Dorsolateral prefrontal cortex (tissue), 120 donors: ENCODE measurements at regions of chr16 and their contacts with region 1.

Region 1: GRCh38 chr16:29900102-29900887 is at the start of gene ASPHD1:
- DNase-seq: peak; percentile 78 to 97 (median 92)
- H3K4me3 ChIP-seq: peak within 1 kb of the TSS; percentile 52 to 87 (median 72)
- H3K27ac ChIP-seq: peak within 1 kb of the TSS in 58 of 59 donors; percentile 70 to 98 (median 92)
- H3K27me3 ChIP-seq: no peaks in the 10 kb centered on the region
- CTCF ChIP-seq: peak in 3 of 56 donors; percentile 2 to 20 (median 19)
- total RNA-seq, gene ASPHD1: 60.7 to 127 (median 92.5) TPM

Region 2: DNA sequence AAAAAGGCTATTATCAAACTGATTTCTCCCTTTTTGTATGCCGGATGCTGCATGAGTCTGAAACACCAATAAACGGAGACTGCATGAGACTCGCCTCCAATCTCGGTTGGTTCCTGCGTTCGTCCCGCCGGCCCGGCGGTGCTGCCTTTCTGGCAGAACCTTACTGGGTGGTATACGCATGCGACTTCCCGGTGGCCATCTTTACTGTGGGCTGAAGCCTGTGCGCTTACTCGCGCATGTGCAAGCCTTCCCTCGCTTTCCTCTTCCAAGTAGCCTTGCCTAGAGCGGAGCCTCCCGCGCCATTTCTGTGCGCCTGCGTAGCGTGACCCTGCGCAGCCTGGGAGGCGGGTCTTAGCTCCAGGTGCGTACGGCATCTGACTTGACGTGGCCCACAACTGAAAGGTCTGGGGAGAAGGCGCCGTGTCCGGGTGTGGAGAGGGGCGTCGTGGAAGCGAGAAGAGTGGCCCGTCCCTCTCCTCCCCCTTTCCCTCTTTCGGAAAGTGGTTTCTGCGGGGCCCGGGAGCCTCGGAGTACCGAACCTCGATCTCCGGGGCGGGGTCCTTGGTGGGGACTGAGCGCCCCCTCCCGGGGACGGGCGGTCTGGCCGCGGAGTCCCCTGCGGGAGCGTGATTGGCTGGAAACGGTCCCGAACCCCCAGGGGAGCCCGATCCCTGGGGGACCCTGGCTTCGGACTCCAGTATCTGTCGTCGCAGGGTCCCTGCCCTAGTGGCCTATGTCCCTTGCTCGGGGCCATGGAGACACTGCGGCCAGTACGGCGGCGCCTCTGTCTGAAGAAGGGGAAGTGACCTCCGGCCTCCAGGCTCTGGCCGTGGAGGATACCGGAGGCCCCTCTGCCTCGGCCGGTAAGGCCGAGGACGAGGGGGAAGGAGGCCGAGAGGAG is 84.3 kb before region 1 on chr16 and contains the start of gene PAGR1:
- intact Hi-C with region 1: loop called in 1 of 2 experiments (anchors 5 kb)
- DNase-seq: peak; percentile 96 to 99 (median 98)
- H3K4me3 ChIP-seq: peak within 1 kb of the TSS; percentile 64 to 97 (median 84)
- H3K27ac ChIP-seq: peak within 1 kb of the TSS; percentile 79 to 99 (median 97)
- H3K27me3 ChIP-seq: no peaks in the 10 kb centered on the region
- CTCF ChIP-seq: peak; percentile 63 to 98 (median 88)
- total RNA-seq, gene PAGR1: 16.6 to 44.6 (median 24.7) TPM

Region 3: GRCh38 chr16:29862884-29863668 is 37.2 kb before region 1 on chr16 and contains the start of gene CDIPT:
- intact Hi-C with region 1: loop called (anchors 1 to 2 kb)
- DNase-seq: peak; percentile 83 to 97 (median 96)
- H3K4me3 ChIP-seq: peak within 1 kb of the TSS; percentile 64 to 100 (median 95)
- H3K27ac ChIP-seq: peak within 1 kb of the TSS; percentile 89 to 99 (median 97)
- H3K27me3 ChIP-seq: no peaks in the 10 kb centered on the region
- CTCF ChIP-seq: peak in 54 of 56 donors; percentile 29 to 84 (median 70)
- total RNA-seq, gene CDIPT: 63.9 to 118 (median 94.7) TPM

Region 4: GRCh38 chr16:29920288-29921033 is 20.2 kb after region 1 on chr16:
- intact Hi-C with region 1: loop called in 1 of 2 experiments (anchors 1 kb)
- DNase-seq: peak in 2 of 10 donors; percentile 42
- H3K4me3 ChIP-seq: peak overlapping the region in 46 of 59 donors; percentile 1 to 50 (median 30)
- H3K27ac ChIP-seq: peak overlapping the region; percentile 3 to 97 (median 89)
- H3K27me3 ChIP-seq: no peaks in the 10 kb centered on the region
- CTCF ChIP-seq: no peak

Region 5: DNA sequence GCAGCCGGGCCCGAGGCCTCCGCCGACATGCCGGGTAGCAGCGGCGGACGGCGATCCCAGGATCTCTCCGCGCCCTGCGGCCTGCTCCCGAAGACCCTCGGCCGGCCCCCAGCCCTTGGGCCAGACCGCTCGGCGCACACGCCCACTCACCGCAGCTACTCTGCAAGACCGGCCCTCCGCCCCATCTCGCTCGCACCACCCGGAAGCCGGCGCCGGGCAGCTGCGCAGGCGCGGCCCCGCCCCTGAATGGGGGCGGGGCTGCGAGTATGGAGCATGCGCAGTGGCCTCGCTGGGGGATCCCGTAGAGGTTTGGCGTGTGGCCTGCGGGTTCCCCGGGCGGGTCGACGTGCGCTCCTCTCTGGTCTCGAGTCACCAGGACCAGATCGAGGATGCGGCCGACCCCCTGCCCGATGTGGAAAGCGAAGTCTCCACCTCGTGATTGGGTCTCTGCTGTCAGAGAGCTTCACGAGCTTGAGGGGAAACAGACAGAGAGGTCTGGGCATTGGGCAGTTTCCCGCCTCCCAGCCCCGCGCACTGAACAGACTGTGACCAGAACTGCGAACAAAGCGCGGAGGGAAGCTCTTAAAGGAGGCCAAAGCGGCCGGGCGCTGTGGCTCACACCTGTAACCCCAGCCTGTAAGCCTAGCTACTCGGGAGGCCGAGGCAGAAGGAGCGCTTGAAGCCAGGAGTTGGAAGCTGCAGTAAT is 25.9 kb after region 1 on chr16 and contains the start of gene KCTD13:
- intact Hi-C with region 1: loop called (anchors 1 to 2 kb)
- DNase-seq: peak; percentile 74 to 93 (median 80)
- H3K4me3 ChIP-seq: peak within 1 kb of the TSS; percentile 57 to 100 (median 97)
- H3K27ac ChIP-seq: peak within 1 kb of the TSS; percentile 11 to 97 (median 92)
- H3K27me3 ChIP-seq: no peaks in the 10 kb centered on the region
- CTCF ChIP-seq: peak in 15 of 56 donors; percentile 5 to 43 (median 22)
- total RNA-seq, gene KCTD13: 38.6 to 87.0 (median 61.2) TPM

Region 6: GRCh38 chr16:29961479-29962343 is 61.4 kb after region 1 on chr16 and contains the start of gene TMEM219:
- intact Hi-C with region 1: loop called in 1 of 2 experiments (anchors 1 kb)
- DNase-seq: peak; percentile 82 to 97 (median 86)
- H3K4me3 ChIP-seq: peak within 1 kb of the TSS; percentile 59 to 98 (median 88)
- H3K27ac ChIP-seq: peak within 1 kb of the TSS; percentile 63 to 99 (median 97)
- H3K27me3 ChIP-seq: no peaks in the 10 kb centered on the region
- CTCF ChIP-seq: peak in 53 of 56 donors; percentile 17 to 74 (median 51)
- total RNA-seq, gene TMEM219: 63.3 to 177 (median 99.3) TPM

Region 7: DNA sequence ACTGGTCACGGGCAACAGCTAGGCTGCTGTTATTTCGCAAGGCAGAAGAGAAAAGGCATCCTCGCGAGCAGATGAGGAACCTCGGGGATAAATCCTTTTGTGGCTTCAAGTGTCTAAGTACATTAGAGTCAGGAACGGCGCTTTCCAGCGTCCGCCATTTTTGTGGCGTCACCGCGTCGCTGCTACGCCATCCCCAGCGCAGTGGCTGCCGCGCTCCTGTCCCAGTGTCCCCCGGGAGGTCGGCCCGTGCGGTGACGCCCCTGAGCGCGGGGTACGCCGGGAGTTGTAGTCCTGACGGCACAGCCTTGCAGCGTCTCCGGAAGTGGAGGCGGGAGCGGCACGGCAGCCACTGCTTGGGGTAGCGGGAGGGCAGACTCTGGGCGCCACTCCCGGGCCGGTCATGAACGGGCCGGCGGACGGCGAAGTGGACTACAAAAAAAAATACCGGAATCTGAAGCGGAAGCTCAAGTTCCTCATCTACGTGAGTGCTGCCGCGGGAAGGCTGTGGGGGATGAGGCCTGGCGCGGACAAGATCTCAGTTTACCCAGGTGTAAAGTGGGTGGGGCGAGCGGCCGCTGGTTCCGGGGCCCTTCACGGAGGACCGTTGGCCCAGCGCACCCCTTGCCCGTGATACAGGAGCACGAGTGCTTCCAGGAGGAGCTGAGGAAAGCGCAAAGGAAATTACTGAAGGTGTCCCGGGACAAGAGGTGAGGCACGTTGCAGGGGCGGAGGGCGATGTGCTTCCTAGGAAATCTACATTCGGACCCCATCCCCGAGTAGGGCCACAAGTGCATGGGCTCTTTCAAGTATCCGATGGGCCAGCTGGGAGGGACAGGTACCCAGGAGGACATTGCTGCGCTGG is 95.8 kb after region 1 on chr16 and contains the start of gene INO80E:
- intact Hi-C with region 1: loop called in 1 of 2 experiments (anchors 10 kb)
- DNase-seq: peak; percentile 98 to 100 (median 99)
- H3K4me3 ChIP-seq: peak within 1 kb of the TSS; percentile 64 to 100 (median 95)
- H3K27ac ChIP-seq: peak within 1 kb of the TSS; percentile 87 to 99 (median 98)
- H3K27me3 ChIP-seq: no peaks in the 10 kb centered on the region
- CTCF ChIP-seq: peak in 39 of 56 donors; percentile 1 to 56 (median 27)
- total RNA-seq, gene INO80E: 38.6 to 73.9 (median 52.6) TPM